ENCODE measurements at regions of chr19 and their contacts with region 1.

Region 1: GRCh38 chr19:39052243-39052746 is 19.9 kb upstream of the FBXO27 start:
- DNase-seq: peak; percentile 75 to 87
- ATAC-seq: peak; percentile 85 to 96
- H3K4me3 ChIP-seq: no peak overlapping the region
- H3K27ac ChIP-seq: peak overlapping the region; percentile 54 to 71
- H3K4me1 ChIP-seq: peaks cover 22% of the 10 kb centered on the region
- CTCF ChIP-seq: peak; percentile 99
- EP300 ChIP-seq: no peak
- POLR2A ChIP-seq: no peak
- RAD21 ChIP-seq: peak; percentile 98 to 99

Region 2: GRCh38 chr19:38891771-38892170 is 160.5 kb before region 1 on chr19:
- CTCF ChIA-PET with region 1: no interaction called
- POLR2A ChIA-PET with region 1: no interaction called
- DNase-seq: no peak
- ATAC-seq: no peak
- H3K4me3 ChIP-seq: no peak overlapping the region
- H3K27ac ChIP-seq: no peak overlapping the region
- H3K4me1 ChIP-seq: no peaks in the 10 kb centered on the region
- CTCF ChIP-seq: no peak
- EP300 ChIP-seq: no peak
- POLR2A ChIP-seq: no peak
- RAD21 ChIP-seq: no peak

Region 3: GRCh38 chr19:38959618-38960017 is 92.7 kb before region 1 on chr19:
- CTCF ChIA-PET with region 1: interaction called, 46 read pairs
- POLR2A ChIA-PET with region 1: no interaction called
- DNase-seq: no peak
- ATAC-seq: no peak
- H3K4me3 ChIP-seq: no peak overlapping the region
- H3K27ac ChIP-seq: no peak overlapping the region
- H3K4me1 ChIP-seq: peaks cover 11% of the 10 kb centered on the region
- CTCF ChIP-seq: no peak
- EP300 ChIP-seq: no peak
- POLR2A ChIP-seq: no peak
- RAD21 ChIP-seq: no peak

Region 4: GRCh38 chr19:38994667-38995066 is 57.6 kb before region 1 on chr19:
- CTCF ChIA-PET with region 1: interaction called, 21 read pairs
- POLR2A ChIA-PET with region 1: no interaction called
- DNase-seq: no peak
- ATAC-seq: no peak
- H3K4me3 ChIP-seq: no peak overlapping the region
- H3K27ac ChIP-seq: no peak overlapping the region
- H3K4me1 ChIP-seq: peaks cover 26% of the 10 kb centered on the region
- CTCF ChIP-seq: no peak
- EP300 ChIP-seq: no peak
- POLR2A ChIP-seq: no peak
- RAD21 ChIP-seq: no peak

Region 5: GRCh38 chr19:39031368-39032062 is 20.8 kb before region 1 on chr19:
- CTCF ChIA-PET with region 1: interaction called, 158 read pairs
- POLR2A ChIA-PET with region 1: no interaction called
- DNase-seq: peak; percentile 99
- ATAC-seq: peak; percentile 92 to 96
- H3K4me3 ChIP-seq: peak overlapping the region; percentile 53
- H3K27ac ChIP-seq: peak overlapping the region; percentile 83 to 92
- H3K4me1 ChIP-seq: peaks cover 25% of the 10 kb centered on the region
- CTCF ChIP-seq: no peak
- EP300 ChIP-seq: no peak
- POLR2A ChIP-seq: peak; percentile 83
- RAD21 ChIP-seq: no peak; a peak in 1 of 5 replicates

Region 6: GRCh38 chr19:39125554-39126311 is 73.4 kb after region 1 on chr19 and contains the start of gene PAK4:
- CTCF ChIA-PET with region 1: interaction called, 14 read pairs
- POLR2A ChIA-PET with region 1: no interaction called
- DNase-seq: peak; percentile 99 to 100
- ATAC-seq: peak; percentile 81 to 89
- H3K4me3 ChIP-seq: peak within 1 kb of the TSS; percentile 84
- H3K27ac ChIP-seq: peak within 1 kb of the TSS; percentile 92 to 94
- H3K4me1 ChIP-seq: peaks cover 61% of the 10 kb centered on the region
- CTCF ChIP-seq: no peak
- EP300 ChIP-seq: no peak
- POLR2A ChIP-seq: peak; percentile 95
- RAD21 ChIP-seq: peak in 1 of 2 experiments; percentile 23; a peak in 1 of 5 replicates
- polyA plus RNA-seq, gene PAK4: 37.9 and 42.9 TPM in 2 replicates

Region 7: DNA sequence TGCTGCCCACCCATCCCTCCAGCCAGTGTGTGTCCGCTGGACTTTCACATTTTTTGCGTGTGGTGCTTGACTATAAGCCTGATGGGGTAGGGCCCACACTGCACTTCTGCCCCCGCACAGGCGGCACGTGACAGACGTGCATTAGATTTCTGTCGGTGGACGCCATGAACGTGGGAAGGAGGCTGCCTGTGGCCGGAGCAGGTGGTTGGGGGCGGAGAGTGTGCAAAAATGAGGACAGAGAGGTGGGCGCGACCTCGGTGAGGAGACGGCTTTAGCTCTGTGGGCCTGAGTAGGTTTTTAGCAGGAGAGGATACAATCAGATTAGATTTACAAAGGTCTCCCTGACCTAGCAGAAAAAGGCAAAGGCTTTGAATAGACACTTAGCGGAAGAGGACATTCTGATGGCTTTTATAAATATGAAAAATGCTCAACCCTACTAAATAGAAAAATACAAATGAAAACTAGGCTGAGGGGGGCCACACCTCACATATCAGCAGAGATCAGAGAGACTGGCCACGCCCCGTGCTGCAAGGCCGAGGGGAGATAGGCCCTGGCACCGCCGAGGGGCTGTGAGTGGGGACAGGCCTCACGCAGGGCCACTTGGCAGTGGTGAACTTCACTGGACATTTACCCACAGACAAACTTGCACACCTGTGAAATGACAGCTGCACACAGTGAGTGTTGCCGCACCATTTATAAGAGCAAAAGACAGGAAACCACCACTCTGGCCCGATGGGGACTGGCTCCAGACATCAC is 98.7 kb after region 1 on chr19:
- CTCF ChIA-PET with region 1: interaction called, 19 read pairs
- POLR2A ChIA-PET with region 1: no interaction called
- DNase-seq: no peak
- ATAC-seq: no peak
- H3K4me3 ChIP-seq: no peak overlapping the region
- H3K27ac ChIP-seq: no peak overlapping the region
- H3K4me1 ChIP-seq: peaks cover 16% of the 10 kb centered on the region
- CTCF ChIP-seq: no peak
- EP300 ChIP-seq: no peak
- POLR2A ChIP-seq: no peak
- RAD21 ChIP-seq: no peak

Region 8: GRCh38 chr19:39187559-39187957 is 135.3 kb after region 1 on chr19:
- CTCF ChIA-PET with region 1: interaction called, 17 read pairs
- POLR2A ChIA-PET with region 1: no interaction called
- DNase-seq: no peak
- ATAC-seq: peak; percentile 35 to 45
- H3K4me3 ChIP-seq: no peak overlapping the region
- H3K27ac ChIP-seq: peak overlapping the region in 1 of 2 experiments; percentile 31; a peak in 3 of 6 replicates
- H3K4me1 ChIP-seq: peaks cover 11% of the 10 kb centered on the region; the same call in 2 of the 3 replicates
- CTCF ChIP-seq: peak; percentile 21; the same call in 2 of the 3 replicates
- EP300 ChIP-seq: no peak
- POLR2A ChIP-seq: peak; percentile 9; the same call in 1 of the 2 replicates
- RAD21 ChIP-seq: no peak; a peak in 1 of 5 replicates

Region 9: DNA sequence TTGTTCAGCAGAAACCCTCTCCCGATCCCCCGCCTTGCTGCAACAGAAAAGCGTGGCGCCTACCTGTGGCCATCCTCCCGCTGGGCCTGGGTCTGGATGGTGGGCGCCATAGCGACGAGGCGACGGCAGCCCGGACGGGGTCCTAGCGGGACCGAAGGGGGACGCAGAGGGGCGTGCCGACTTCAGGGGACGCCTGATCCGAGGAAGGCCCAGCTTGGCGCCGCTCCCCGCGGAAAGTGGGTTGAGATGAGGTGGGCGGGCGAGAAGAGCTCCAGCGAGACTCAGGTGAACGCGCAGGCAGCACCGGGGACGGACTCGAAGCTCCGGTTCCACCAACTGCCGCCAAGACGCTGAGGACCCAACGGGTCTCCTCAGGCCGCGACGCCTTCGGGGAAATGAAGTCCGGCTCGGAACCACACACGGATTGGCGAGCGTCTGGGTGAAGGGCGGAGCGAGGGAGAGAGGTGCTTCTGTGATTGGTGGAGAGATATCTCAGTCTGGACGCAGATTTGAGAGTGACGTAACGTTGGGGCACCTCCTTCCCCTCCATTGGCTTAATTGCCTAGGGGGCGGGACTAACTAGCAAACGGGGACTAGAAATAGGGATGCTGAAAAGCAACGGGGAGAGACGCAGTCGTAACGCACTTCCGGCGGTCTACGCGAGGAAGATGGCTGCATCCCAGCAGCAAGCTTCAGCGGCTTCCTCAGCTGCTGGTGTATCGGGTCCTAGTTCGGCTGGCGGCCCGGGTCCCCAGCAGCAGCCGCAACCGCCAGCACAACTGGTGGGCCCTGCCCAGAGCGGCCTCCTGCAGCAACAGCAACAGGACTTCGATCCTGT is 338.7 kb after region 1 on chr19 and contains the starts of genes MED29 and PAF1:
- CTCF ChIA-PET with region 1: no interaction called
- POLR2A ChIA-PET with region 1: no interaction called
- DNase-seq: peak; percentile 100
- ATAC-seq: peak; percentile 91 to 97
- H3K4me3 ChIP-seq: peak within 1 kb of the TSS; percentile 68
- H3K27ac ChIP-seq: peak within 1 kb of the TSS; percentile 89 to 90
- H3K4me1 ChIP-seq: peaks cover 15% of the 10 kb centered on the region; the same call in 2 of the 3 replicates
- CTCF ChIP-seq: no peak
- EP300 ChIP-seq: no peak
- POLR2A ChIP-seq: peak; percentile 99
- RAD21 ChIP-seq: no peak; a peak in 1 of 5 replicates
- polyA plus RNA-seq, gene MED29: 55.7 and 57.5 TPM in 2 replicates
- polyA plus RNA-seq, gene PAF1: 73.0 and 103 TPM in 2 replicates